Prostate gland (tissue), 2 donors: ENCODE measurements at regions of chr12 and their contacts with region 1.

Region 1: DNA sequence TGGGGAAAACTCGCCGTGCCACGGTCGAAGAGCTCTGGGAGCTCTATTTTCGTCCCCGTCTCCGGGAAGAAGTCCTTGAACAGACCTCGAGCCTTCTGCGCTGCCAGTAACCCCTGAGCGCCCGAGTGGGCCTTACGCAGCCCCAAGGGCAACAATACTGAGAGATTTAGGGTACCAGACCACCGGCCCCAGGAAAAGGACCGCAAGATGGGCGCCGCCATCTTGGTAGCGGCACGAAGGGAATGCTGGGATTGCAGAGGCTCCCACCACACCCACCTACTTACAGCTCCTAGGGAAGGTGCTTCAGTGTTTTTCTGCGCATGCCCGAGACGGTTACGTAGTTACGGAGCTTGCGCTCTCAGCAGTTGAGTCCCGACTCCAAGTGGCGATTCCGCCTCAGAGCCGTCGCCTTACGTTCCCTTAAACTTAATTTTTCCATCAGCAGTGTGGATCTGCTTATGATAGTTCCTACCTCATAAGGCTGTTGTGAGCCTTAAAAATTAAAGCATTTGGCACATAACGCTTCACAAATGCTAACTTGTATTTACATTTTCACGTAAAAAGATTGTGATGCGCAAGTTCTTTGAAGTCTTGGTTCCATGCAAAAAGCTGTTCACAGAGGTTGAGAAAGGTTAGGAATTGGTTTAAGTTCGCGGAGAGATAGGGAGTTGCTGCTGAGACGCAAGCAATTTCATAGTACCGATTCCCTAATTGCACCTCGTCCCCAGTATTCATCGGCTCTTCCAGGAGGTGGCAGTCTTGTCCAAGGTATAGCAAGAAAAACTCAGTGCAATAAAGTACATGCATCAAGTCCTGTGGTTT is at the start of gene YARS2:
- DNase-seq: peak; percentile 96
- H3K4me3 ChIP-seq: peak within 1 kb of the TSS; percentile 87 to 88
- H3K27ac ChIP-seq: peak within 1 kb of the TSS; percentile 91 to 92
- H3K4me1 ChIP-seq: peaks cover 6% of the 10 kb centered on the region
- H3K27me3 ChIP-seq: no peaks in the 10 kb centered on the region
- CTCF ChIP-seq: peak; percentile 52 to 91 (median 83)
- POLR2A ChIP-seq: peak; percentile 65
- total RNA-seq, gene YARS2: 19.2 to 26.2 TPM

Region 2: DNA sequence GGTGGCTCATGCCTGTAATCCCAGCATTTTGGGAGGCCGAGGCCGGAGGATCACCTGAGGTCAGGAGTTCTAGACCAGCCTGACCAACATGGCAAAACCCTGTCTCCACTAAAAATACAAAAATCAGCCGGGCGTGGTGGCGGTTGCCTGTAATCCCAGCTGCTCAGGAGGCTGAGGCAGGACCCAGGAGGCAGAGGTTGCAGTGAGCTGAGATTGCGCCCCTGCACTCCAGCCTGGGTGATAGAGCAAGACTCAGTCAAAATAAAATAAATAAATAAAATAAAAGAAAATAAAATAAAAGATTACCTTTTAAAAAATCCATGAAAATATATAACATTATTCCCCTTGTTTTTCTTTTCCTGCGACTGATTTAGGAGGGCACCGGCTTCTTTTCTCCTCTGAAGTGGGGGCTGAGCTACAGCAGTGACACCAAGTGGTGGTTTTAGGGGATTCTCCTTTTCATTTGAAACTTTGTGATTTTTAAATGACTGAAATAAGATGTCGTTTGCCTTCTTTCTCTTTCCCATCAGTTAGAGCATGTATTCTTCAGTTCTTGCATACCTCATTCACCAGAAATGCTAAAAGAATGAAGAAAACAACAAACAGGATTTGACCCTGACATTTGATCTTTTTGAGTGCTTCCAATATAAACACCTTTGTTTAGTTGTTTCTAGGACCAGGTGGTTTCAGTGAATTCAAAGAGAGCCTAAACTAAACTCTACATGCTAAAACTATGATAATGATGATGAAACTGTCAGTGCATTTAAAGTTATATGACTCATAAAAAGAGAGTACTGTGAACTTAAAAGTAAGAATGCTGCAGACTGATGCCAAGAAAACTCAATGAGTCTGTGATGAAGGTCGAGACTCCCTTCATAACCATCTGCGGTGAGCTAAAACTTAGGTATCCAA is 163.3 kb after region 1 on chr12:
- intact Hi-C with region 1: loop called (anchors 2 kb)
- DNase-seq: no peak
- H3K4me3 ChIP-seq: no peak overlapping the region
- H3K27ac ChIP-seq: peak overlapping the region; percentile 29 to 45
- H3K4me1 ChIP-seq: no peaks in the 10 kb centered on the region
- H3K27me3 ChIP-seq: no peaks in the 10 kb centered on the region
- CTCF ChIP-seq: peak; percentile 42 to 62 (median 46)
- POLR2A ChIP-seq: no peak

Region 3: DNA sequence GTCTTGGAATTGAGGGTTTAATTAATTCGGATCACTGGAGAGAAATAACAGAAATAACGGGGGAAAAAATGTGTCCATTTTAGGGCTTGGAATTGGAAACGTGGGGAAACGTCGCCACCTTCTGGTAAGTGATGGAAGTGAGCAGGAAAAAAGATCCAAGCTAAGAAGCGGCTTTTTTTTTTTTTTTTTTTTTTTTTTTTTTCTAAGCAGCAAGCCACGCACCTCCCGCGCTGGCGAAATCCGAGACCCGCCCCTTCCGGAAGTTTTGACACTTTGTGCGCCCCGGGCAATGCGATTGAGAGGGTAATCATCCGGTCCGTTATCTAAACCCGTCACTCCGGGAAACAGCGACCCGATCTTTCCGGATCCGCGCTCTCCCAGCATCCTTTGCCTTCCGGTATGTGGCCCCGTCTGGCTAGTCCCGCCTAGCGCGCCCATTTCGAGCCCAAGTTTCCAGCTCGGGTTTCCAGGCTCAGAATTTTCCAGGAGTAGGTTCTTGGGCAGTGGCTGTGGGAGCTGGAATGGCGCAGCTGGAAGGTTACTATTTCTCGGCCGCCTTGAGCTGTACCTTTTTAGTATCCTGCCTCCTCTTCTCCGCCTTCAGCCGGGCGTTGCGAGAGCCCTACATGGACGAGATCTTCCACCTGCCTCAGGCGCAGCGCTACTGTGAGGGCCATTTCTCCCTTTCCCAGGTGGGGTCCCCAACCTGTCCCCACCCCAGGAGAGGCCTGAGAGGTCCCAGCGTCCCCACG is 1266.4 kb after region 1 on chr12 and contains the start of gene ALG10:
- intact Hi-C with region 1: loop called (anchors 2 kb)
- DNase-seq: peak; percentile 97
- H3K4me3 ChIP-seq: peak within 1 kb of the TSS; percentile 55 to 70
- H3K27ac ChIP-seq: peak within 1 kb of the TSS; percentile 81 to 86
- H3K4me1 ChIP-seq: no peaks in the 10 kb centered on the region
- H3K27me3 ChIP-seq: no peaks in the 10 kb centered on the region
- CTCF ChIP-seq: peak; percentile 37 to 77 (median 68)
- POLR2A ChIP-seq: no peak
- total RNA-seq, gene ALG10: 19.9 to 26.7 TPM

Region 4: DNA sequence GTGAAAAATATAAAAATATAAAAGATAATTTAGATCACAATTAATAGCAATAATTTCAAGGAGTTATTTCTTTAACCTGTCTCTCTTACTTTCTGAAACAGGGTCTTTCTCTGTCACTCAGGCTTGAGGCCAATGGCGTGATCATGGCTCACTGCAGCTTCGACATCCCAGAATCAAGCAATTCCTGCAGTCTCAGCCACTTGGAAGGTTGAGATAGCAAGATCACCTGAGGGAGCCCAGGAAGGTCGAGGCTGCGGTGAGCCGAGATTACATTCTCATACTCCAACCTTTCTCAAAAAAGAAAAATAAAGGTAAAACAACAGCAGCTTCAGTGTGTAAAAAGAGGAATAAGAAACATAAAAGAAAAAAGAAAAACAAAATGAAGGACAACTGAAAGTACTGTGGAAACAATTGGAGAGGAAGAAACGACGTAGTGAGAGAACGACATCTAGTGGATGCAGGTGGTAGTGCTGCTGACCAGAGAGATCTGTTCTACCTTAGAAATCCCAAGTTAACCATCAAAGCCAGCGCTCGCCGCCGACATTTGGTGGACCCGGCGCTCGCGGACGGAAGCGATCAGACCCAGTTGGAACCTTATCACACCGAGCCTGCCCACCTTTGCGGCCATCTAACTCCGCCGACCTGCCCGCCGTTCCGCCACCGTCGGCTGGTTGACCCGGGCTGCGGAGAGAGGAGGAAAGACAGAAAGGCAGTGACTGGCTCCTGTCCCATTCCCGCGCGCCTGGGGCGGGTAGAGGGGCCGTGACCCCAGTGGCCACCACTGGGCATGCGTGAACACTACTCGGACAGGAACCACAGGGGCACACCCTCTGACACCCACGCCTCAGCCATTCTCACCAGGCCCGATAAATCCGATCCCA is 1462.5 kb after region 1 on chr12:
- intact Hi-C with region 1: loop called (anchors 5 kb)
- DNase-seq: peak; percentile 63
- H3K4me3 ChIP-seq: peak overlapping the region; percentile 18 to 38
- H3K27ac ChIP-seq: peak overlapping the region in 1 of 2 donors; percentile 14
- H3K4me1 ChIP-seq: no peaks in the 10 kb centered on the region
- H3K27me3 ChIP-seq: no peaks in the 10 kb centered on the region
- CTCF ChIP-seq: peak; percentile 72 to 79 (median 76)
- POLR2A ChIP-seq: no peak